Psoas muscle (tissue), 8 donors: ENCODE measurements at regions of chr3 and their contacts with region 1.

Region 1: DNA sequence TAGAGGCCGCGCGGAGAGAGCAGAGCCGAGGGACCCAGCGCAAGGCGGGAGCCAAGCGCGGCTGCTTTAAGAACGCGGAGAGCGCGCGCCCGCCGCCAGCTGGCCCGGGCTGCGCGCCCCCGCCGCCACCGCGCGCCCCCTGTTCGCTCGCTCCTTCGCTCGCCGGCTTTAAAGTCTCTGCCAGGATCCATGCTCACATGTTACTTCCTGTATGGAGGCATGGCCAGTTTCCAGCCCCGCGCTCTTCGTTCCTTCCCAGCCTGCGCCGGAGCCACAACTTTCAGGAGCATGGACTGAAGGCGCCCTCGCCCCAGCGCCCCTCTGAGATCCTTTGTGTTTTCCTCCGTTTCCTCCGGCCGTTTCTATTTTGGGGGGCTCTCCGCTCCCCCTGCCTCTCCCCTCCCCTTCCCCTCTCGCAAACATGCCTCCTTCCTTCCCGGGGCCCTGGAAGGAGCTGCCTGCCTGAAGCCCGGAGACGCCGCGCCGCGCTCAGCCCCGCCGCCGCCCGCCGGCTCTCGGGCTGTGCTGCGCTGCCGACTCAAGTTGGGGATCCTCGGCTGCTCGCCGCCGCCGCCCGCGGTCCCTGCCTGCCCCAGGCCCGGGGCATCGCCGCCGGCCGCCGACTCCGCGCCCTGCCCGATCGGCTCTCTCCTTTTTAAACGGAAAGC is at the start of gene PTPRG:
- DNase-seq: peak; percentile 89 to 95
- ATAC-seq: peak; percentile 83 to 88 (median 86)
- H3K4me3 ChIP-seq: peak within 1 kb of the TSS; percentile 96
- H3K27ac ChIP-seq: peak within 1 kb of the TSS; percentile 97
- H3K4me1 ChIP-seq: peaks cover 10% of the 10 kb centered on the region
- H3K27me3 ChIP-seq: no peaks in the 10 kb centered on the region
- CTCF ChIP-seq: no peak
- total RNA-seq, gene PTPRG: 12.6 to 29.5 (median 18.6) TPM

Region 2: DNA sequence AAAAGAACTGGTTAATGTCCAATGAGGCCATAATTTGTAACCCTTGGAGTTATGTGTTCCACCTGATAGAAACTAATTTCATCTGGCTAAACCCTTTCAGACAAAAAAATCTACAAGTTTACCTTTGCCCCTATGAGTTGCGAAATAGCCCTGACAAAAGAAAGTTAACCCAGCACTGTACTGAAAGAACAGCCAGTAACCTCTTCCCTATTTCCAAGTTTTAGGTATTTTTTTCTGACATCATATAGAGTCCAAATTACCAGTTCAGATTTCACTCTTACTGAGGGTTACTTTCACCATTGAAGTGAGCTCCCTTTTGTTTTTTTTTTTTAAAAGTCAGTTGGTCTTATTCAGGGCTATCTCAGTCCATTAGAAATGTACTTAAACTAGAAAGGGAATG is 42.9 kb before region 1 on chr3:
- intact Hi-C with region 1: no loop called
- DNase-seq: no peak
- ATAC-seq: no peak
- H3K4me3 ChIP-seq: no peak overlapping the region
- H3K27ac ChIP-seq: no peak overlapping the region
- H3K4me1 ChIP-seq: no peaks in the 10 kb centered on the region
- H3K27me3 ChIP-seq: no peaks in the 10 kb centered on the region
- CTCF ChIP-seq: no peak

Region 3: GRCh38 chr3:61682671-61683548 is 121.4 kb after region 1 on chr3:
- intact Hi-C with region 1: loop called in 1 of 2 experiments (anchors 10 kb)
- DNase-seq: no peak
- ATAC-seq: peak; percentile 26 to 61 (median 54)
- H3K4me3 ChIP-seq: no peak overlapping the region
- H3K27ac ChIP-seq: peak overlapping the region; percentile 21
- H3K4me1 ChIP-seq: peaks cover 36% of the 10 kb centered on the region
- H3K27me3 ChIP-seq: no peaks in the 10 kb centered on the region
- CTCF ChIP-seq: no peak

Region 4: DNA sequence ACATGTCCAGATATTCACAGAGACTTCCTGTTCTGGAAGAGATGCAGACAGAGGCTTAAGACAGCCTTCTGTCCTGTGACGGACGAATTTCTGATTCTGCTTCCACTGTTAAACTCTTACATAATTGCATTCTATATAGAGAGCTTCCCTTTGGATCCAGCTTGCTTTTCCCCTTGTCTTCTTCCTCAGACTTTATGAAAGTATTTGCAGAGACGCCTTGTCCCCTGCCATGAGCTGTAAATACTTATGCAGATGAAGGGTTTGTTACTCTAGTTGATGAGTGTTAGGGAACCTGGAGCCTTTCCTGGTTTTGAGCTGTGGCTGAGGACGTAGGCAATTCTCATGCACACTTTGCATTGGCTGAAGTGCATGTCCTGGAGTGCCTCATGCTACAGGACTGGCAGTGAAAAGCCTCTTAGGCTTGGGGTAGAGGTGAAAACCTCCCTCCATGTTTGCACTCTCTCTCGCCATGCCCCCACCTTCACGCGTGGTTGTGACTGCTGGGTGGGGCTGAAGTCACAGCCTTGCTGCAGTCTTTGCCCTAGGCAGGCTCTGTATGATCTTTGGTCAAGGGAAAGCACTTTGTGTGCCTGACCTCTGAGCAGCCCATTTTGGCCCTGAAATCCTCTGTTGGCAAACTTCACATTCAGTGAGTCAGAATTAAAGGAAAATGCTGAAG is 286.4 kb after region 1 on chr3:
- intact Hi-C with region 1: loop called in 1 of 2 experiments (anchors 5 kb)
- DNase-seq: peak; percentile 50 to 71
- ATAC-seq: peak in 3 of 4 donors; percentile 72 to 80 (median 74)
- H3K4me3 ChIP-seq: no peak overlapping the region
- H3K27ac ChIP-seq: peak overlapping the region; percentile 25
- H3K4me1 ChIP-seq: peaks cover 32% of the 10 kb centered on the region
- H3K27me3 ChIP-seq: no peaks in the 10 kb centered on the region
- CTCF ChIP-seq: no peak

Region 5: GRCh38 chr3:61872077-61872706 is 310.7 kb after region 1 on chr3:
- intact Hi-C with region 1: no loop called
- DNase-seq: no peak
- ATAC-seq: no peak
- H3K4me3 ChIP-seq: no peak overlapping the region
- H3K27ac ChIP-seq: no peak overlapping the region
- H3K4me1 ChIP-seq: peaks cover 40% of the 10 kb centered on the region
- H3K27me3 ChIP-seq: no peaks in the 10 kb centered on the region
- CTCF ChIP-seq: no peak

Region 6: DNA sequence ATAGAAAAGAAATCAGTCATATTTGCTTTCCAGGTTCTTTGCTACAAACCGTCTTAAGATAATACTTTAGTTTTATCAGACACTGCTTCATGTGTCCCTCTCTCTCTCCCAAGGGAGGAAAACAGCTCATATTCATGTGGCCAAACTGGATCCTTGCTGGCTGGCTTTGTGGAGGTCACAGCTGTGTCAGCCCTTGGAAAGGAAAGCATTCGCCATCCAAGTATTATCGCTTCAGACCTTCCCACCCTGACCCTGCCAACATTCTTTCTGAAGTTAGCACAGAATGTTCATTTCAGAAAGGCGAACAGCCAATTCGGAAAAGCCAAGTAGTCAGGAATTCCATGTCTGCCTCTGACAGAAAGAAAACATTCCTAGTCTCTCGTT is 598.2 kb after region 1 on chr3:
- intact Hi-C with region 1: loop called in 1 of 2 experiments (anchors 2 kb)
- DNase-seq: peak; percentile 76 to 89
- ATAC-seq: peak; percentile 87 to 91 (median 90)
- H3K4me3 ChIP-seq: peak overlapping the region; percentile 45
- H3K27ac ChIP-seq: peak overlapping the region; percentile 86
- H3K4me1 ChIP-seq: peaks cover 75% of the 10 kb centered on the region
- H3K27me3 ChIP-seq: no peaks in the 10 kb centered on the region
- CTCF ChIP-seq: no peak